Activated B cell treated with CpG ODN at 0.5 μM for 24 hours (primary cell): ENCODE measurements at regions of chr18 and their contacts with region 1.

Region 1: DNA sequence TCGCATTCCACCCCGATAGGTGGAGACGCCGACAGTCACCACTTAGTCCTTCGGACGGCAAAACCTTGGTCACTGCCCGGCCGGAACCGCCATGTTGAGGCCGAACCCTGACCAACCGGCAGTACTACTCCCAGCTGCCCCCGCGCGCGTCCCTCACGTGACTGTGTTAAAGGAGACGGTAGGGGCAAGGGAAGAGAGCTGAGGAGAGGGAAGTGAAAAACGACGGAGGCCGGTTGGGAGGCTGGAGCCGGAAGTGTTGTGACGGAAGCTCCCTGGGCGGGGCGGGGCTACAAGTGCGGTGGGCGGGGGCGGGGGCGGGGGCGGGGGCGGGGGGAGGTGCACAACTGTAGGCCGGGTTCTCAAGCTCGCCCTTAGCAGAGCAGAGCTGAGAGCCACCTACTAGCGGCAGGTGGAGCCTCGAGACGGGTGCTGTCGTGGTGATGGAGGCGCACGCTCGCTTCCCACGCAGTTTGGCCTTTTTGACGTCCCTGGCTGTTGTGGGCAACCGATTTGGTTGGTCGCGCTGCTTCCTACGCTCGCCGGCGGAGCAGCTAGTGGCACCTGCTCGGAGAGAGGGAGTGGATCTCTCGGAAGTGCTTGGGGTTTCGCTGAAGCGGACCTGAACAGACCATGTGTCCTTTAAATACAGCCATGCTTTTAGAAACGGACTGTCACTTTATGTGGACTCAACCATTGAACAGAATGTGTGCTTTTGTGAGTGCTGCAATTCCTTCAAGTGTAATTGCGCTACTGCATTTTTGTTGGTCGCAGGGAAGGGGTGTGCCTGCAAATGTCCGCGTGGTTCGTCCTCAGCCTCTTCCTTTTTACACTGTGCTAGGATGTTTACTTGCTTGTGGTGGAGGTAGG is at the start of gene TRAPPC8:
- DNase-seq: peak; percentile 94
- ATAC-seq: peak; percentile 82
- H3K4me3 Mint-ChIP-seq: peak within 1 kb of the TSS; percentile 100
- H3K27ac Mint-ChIP-seq: peak within 1 kb of the TSS; percentile 100
- H3K4me1 Mint-ChIP-seq: peaks cover 48% of the 10 kb centered on the region
- H3K27me3 Mint-ChIP-seq: no peaks in the 10 kb centered on the region
- CTCF ChIP-seq: no peak
- total RNA-seq, gene TRAPPC8: 62.9 and 69.2 TPM in 2 replicates

Region 2: DNA sequence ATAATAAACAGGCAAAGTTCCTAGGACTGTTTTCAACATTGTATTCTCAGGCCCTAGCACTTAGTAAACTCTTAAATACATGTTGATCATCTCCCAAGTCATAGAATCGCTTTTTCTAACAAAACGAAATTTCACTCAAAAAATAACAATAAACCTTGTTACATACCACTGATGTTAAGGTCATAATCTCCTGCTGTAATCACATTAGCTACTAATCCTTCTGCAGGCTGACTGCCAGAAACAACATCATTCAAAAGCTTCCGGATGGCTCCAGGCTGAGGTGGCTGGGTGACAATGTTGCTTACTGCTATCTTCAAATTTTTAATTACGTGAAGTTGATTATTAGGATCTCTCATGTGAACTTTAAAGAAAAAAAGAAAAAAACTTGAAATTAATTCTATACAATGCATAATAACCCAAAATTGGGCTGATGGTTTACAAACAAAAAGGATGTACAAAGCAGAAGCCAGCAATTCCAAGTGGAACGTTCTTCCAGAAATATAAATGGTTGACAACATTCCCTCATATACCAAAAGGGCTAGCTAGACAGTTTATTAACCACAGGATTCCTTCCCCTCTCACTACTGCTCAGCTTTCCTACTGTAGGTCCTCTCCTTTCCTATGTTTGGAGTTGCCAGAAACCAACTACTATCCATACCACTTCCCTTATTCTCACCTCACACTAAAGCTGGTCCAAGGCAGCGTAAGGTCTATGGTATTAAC is 11.9 kb before region 1 on chr18:
- CTCF ChIA-PET with region 1: interaction called, 6 read pairs
- POLR2A ChIA-PET with region 1: interaction called, 12 read pairs
- intact Hi-C with region 1: no loop called
- DNase-seq: no peak
- ATAC-seq: no peak
- H3K4me3 Mint-ChIP-seq: no peak overlapping the region
- H3K27ac Mint-ChIP-seq: no peak overlapping the region
- H3K4me1 Mint-ChIP-seq: no peaks in the 10 kb centered on the region
- H3K27me3 Mint-ChIP-seq: no peaks in the 10 kb centered on the region
- CTCF ChIP-seq: no peak

Region 3: GRCh38 chr18:31977270-31977872 is 34.1 kb after region 1 on chr18:
- CTCF ChIA-PET with region 1: interaction called, 8 read pairs
- POLR2A ChIA-PET with region 1: interaction called, 3 read pairs
- intact Hi-C with region 1: loop called (anchors 1 kb)
- DNase-seq: no peak
- ATAC-seq: peak; percentile 25
- H3K4me3 Mint-ChIP-seq: no peak overlapping the region
- H3K27ac Mint-ChIP-seq: no peak overlapping the region
- H3K4me1 Mint-ChIP-seq: no peaks in the 10 kb centered on the region
- H3K27me3 Mint-ChIP-seq: no peaks in the 10 kb centered on the region
- CTCF ChIP-seq: no peak

Region 4: DNA sequence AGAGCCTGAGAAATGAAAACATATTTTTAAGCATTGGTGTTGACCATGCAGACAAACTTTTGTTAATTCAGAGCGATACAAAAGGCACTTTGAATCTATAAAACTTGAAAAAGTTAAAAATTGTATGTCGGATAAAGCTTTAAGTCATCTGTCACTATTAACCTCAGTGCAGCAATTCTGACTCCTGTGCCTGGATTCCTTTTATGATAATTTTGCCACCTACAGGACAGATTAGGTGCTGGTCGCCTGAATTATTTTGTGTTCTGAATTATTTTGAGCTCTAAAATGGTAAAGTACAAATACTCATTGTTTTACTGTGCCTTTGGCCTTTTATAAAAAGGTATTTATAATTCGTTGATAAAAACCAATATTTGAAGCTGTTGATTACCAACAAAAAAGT is 129.1 kb after region 1 on chr18:
- CTCF ChIA-PET with region 1: interaction called, 19 read pairs
- POLR2A ChIA-PET with region 1: interaction called, 13 read pairs
- intact Hi-C with region 1: loop called (anchors 1 kb)
- DNase-seq: no peak
- ATAC-seq: peak; percentile 28
- H3K4me3 Mint-ChIP-seq: no peak overlapping the region
- H3K27ac Mint-ChIP-seq: no peak overlapping the region
- H3K4me1 Mint-ChIP-seq: no peaks in the 10 kb centered on the region
- H3K27me3 Mint-ChIP-seq: no peaks in the 10 kb centered on the region
- CTCF ChIP-seq: no peak

Region 5: GRCh38 chr18:32470713-32471633 is 527.7 kb after region 1 on chr18 and contains the start of gene GAREM1:
- CTCF ChIA-PET with region 1: no interaction called
- POLR2A ChIA-PET with region 1: no interaction called
- intact Hi-C with region 1: loop called (anchors 2 kb)
- DNase-seq: peak; percentile 67
- ATAC-seq: peak; percentile 95
- H3K4me3 Mint-ChIP-seq: peak within 1 kb of the TSS; percentile 83
- H3K27ac Mint-ChIP-seq: no peak within 1 kb of the TSS
- H3K4me1 Mint-ChIP-seq: peaks cover 27% of the 10 kb centered on the region
- H3K27me3 Mint-ChIP-seq: peaks cover 53% of the 10 kb centered on the region
- CTCF ChIP-seq: no peak
- total RNA-seq, gene GAREM1: not detected in 2 replicates